Natural killer cell (primary cell): ENCODE measurements at regions of chrX and their contacts with region 1.

Region 1: GRCh38 chrX:20141281-20142220 is at the start of gene EIF1AX:
- DNase-seq: peak; percentile 89 to 96
- ATAC-seq: peak; percentile 96 to 100 (median 97)
- H3K4me3 ChIP-seq: peak within 1 kb of the TSS; percentile 90
- H3K4me3 Mint-ChIP-seq: peak within 1 kb of the TSS; percentile 92
- H3K27ac ChIP-seq: peak within 1 kb of the TSS; percentile 79
- H3K27ac Mint-ChIP-seq: peak within 1 kb of the TSS; percentile 91 to 94
- H3K4me1 ChIP-seq: peaks cover 9% of the 10 kb centered on the region
- H3K4me1 Mint-ChIP-seq: peaks cover 19 to 25% of the 10 kb centered on the region in 2 donors
- H3K27me3 ChIP-seq: no peaks in the 10 kb centered on the region
- H3K27me3 Mint-ChIP-seq: no peaks in the 10 kb centered on the region
- CTCF ChIP-seq: no peak
- total RNA-seq, gene EIF1AX: 31.6 to 57.2 (median 31.7) TPM

Region 2: GRCh38 chrX:20263474-20263873 is 121.9 kb after region 1 on chrX:
- intact Hi-C with region 1: loop called (anchors 2 kb)
- DNase-seq: peak in 1 of 2 donors; percentile 71
- ATAC-seq: peak; percentile 17 to 42 (median 32)
- H3K4me3 ChIP-seq: peak overlapping the region; percentile 92
- H3K4me3 Mint-ChIP-seq: peak overlapping the region; percentile 78
- H3K27ac ChIP-seq: peak overlapping the region; percentile 70
- H3K27ac Mint-ChIP-seq: peak overlapping the region; percentile 93 to 94
- H3K4me1 ChIP-seq: peaks cover 17% of the 10 kb centered on the region
- H3K4me1 Mint-ChIP-seq: peaks cover 34% of the 10 kb centered on the region in 2 donors
- H3K27me3 ChIP-seq: no peaks in the 10 kb centered on the region
- H3K27me3 Mint-ChIP-seq: peaks cover 0 to 3% of the 10 kb centered on the region in 2 donors
- CTCF ChIP-seq: no peak